ENCODE measurements at regions of chr4 and their contacts with region 1.

Region 1: DNA sequence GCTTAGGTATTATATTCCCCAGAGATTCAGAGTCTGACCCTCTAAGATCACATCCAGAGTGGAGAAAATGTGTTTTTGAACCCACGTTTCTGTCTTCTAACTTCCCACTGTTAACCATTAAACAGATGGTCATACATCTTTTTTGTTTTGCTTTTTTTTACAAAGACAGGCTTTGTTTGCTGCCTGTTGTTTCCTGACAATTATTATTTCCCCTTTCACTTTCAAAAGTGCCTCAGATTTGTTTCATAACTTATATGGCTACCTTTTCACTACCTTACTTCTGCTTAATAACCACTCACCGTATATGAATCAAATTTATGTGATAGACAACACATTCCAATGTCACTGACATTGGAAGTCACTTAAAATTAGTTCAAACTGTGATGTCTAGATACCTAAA is 142.2 kb downstream of the HS3ST1 start:
- DNase-seq: no peak
- ATAC-seq: no peak
- H3K4me3 ChIP-seq: no peak overlapping the region
- H3K27ac ChIP-seq: no peak overlapping the region
- H3K4me1 ChIP-seq: no peaks in the 10 kb centered on the region
- H3K27me3 ChIP-seq: no peaks in the 10 kb centered on the region
- CTCF ChIP-seq: no peak

Region 2: GRCh38 chr4:9952415-9952950 is 1334.0 kb before region 1 on chr4:
- intact Hi-C with region 1: loop called in 1 of 10 experiments (anchors 10 kb)
- DNase-seq: no peak
- ATAC-seq: no peak
- H3K4me3 ChIP-seq: no peak overlapping the region
- H3K27ac ChIP-seq: no peak overlapping the region
- H3K4me1 ChIP-seq: peaks cover 0 to 7% (median 3%) of the 10 kb centered on the region in 9 donors
- H3K27me3 ChIP-seq: no peaks in the 10 kb centered on the region
- CTCF ChIP-seq: no peak

Region 3: GRCh38 chr4:11198526-11199310 is 87.8 kb before region 1 on chr4:
- intact Hi-C with region 1: no loop called
- DNase-seq: no peak
- ATAC-seq: no peak
- H3K4me3 ChIP-seq: no peak overlapping the region
- H3K27ac ChIP-seq: no peak overlapping the region
- H3K4me1 ChIP-seq: no peaks in the 10 kb centered on the region
- H3K27me3 ChIP-seq: no peaks in the 10 kb centered on the region
- CTCF ChIP-seq: no peak